ENCODE measurements at regions of chr12 and their contacts with region 1.

Region 1: GRCh38 chr12:15584366-15585041 is 204.7 kb downstream of the EPS8 start:
- DNase-seq: peak; percentile 52
- H3K4me3 ChIP-seq: no peak overlapping the region
- H3K27ac ChIP-seq: no peak overlapping the region
- H3K4me1 ChIP-seq: no peaks in the 10 kb centered on the region
- H3K27me3 ChIP-seq: peaks cover 5 to 11% of the 10 kb centered on the region in 2 experiments
- CTCF ChIP-seq: peak; percentile 48 to 60
- POLR2A ChIP-seq: no peak

Region 2: DNA sequence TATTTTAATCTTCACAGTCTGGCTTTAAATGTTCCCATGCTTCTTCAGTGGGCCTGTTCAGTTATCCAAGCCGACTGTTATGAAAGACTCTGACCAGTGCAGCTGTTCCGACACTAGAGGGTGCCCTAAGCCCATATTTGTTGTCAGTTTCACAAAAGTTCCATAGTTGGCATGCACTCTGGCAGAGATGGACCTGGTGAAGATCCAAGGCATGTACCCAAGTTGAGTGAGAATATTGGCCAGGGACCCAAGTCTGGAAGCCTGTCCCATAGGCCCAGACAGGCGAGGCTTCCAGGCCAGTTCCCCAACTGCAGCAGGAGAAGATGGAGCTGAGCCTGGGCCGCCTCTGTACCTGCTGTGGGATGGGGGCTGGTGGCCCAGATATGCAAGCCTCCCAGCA is 860.7 kb before region 1 on chr12:
- CTCF ChIA-PET with region 1: interaction called, 12 read pairs
- POLR2A ChIA-PET with region 1: no interaction called
- dilution Hi-C with region 1: no loop called
- intact Hi-C with region 1: no loop called
- DNase-seq: peak; percentile 56
- H3K4me3 ChIP-seq: no peak overlapping the region
- H3K27ac ChIP-seq: no peak overlapping the region
- H3K4me1 ChIP-seq: no peaks in the 10 kb centered on the region
- H3K27me3 ChIP-seq: peaks cover 0 to 2% of the 10 kb centered on the region in 2 experiments
- CTCF ChIP-seq: peak; percentile 57 to 75
- POLR2A ChIP-seq: no peak

Region 3: GRCh38 chr12:15122344-15122743 is 462.2 kb before region 1 on chr12:
- CTCF ChIA-PET with region 1: no interaction called
- POLR2A ChIA-PET with region 1: no interaction called
- dilution Hi-C with region 1: no loop called
- intact Hi-C with region 1: no loop called
- DNase-seq: no peak
- H3K4me3 ChIP-seq: no peak overlapping the region
- H3K27ac ChIP-seq: no peak overlapping the region
- H3K4me1 ChIP-seq: no peaks in the 10 kb centered on the region
- H3K27me3 ChIP-seq: peaks cover 0 to 3% of the 10 kb centered on the region in 2 experiments
- CTCF ChIP-seq: no peak
- POLR2A ChIP-seq: no peak

Region 4: DNA sequence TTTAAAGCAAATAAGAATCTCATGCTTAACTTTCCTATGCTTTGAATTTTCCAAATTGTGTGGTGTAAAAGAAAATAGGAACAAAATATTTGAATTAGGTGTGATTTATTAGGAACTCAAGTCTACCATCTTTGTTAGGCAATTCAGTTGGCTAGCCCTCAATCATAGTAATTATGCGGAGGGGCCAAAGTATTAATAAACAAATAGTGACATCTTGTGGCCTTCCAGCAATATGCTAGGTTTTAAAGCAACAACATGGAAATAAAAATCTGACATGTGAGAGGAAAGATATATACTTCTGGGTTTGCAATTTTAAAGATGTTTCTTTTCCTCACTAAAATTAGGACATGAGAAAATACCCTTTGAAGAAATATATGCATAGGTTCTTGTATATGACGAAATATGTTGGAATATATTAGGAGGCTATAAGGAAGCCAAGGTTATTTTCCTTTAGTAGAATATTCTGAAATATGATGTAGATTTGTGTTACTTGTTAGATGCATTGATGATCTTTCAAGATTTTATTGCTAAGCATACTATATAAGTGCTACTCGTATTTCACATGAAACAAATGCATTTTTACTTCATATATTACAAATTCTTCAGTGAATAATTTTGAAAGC is 61.8 kb before region 1 on chr12:
- CTCF ChIA-PET with region 1: interaction called, 18 read pairs
- POLR2A ChIA-PET with region 1: no interaction called
- dilution Hi-C with region 1: no loop called
- intact Hi-C with region 1: no loop called
- DNase-seq: peak; percentile 54
- H3K4me3 ChIP-seq: no peak overlapping the region
- H3K27ac ChIP-seq: no peak overlapping the region
- H3K4me1 ChIP-seq: no peaks in the 10 kb centered on the region
- H3K27me3 ChIP-seq: peaks cover 6 to 24% of the 10 kb centered on the region in 2 experiments
- CTCF ChIP-seq: peak; percentile 22 to 27
- POLR2A ChIP-seq: no peak

Region 5: DNA sequence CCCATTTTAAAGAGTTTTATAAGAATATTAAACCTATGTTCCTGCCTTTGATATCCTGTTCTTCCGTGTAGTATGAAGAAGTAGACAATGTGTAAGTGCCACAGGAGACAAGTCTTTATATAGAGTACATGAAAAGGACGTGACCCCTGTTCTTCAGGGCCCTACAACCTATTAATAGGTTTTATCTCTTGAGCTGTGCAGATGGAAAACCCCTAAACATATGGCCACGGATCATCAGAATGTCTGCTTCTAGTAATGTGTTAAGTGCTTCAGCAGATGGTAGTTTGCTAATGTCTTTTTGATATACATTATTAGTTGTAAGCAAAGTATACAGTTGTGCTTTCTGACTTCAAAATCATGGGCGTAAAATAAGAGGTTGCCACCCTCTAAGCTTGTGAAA is 33.7 kb before region 1 on chr12:
- CTCF ChIA-PET with region 1: interaction called, 10 read pairs
- POLR2A ChIA-PET with region 1: no interaction called
- dilution Hi-C with region 1: no loop called
- intact Hi-C with region 1: no loop called
- DNase-seq: no peak
- H3K4me3 ChIP-seq: no peak overlapping the region
- H3K27ac ChIP-seq: no peak overlapping the region
- H3K4me1 ChIP-seq: no peaks in the 10 kb centered on the region
- H3K27me3 ChIP-seq: peaks cover 3 to 4% of the 10 kb centered on the region in 2 experiments
- CTCF ChIP-seq: no peak
- POLR2A ChIP-seq: no peak

Region 6: DNA sequence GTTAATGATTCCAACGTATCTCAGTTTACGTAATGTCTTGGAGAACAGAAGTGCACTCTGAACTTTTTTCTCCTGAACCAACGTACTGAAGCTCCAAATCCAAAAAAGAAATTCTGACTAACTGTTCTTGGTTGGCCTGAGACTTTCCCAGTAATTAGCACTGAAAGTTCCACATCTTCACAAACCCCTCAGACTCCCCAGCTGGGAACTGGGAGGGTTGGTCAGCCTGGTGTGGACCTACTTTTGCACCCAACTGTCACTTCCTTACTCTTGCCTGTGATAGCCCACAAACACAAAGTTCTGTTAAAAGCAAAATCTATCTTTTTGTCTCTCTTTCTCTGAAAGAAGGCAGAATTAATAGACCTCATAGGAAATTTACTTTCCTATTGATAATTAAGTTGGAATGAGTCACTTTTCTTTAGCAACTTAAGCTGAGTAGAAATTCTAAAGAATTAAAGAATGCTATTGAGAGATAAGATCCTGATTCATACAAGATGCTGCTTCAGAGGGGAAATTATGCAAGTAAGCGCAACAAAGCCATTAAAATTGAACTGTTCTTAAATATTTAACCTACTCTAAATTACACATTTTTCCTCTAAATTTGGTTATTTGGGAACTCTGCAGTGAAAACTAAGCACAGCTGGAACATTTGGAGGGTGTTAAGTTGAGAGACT is 49.6 kb after region 1 on chr12:
- CTCF ChIA-PET with region 1: no interaction called
- POLR2A ChIA-PET with region 1: no interaction called
- dilution Hi-C with region 1: no loop called
- intact Hi-C with region 1: no loop called
- DNase-seq: peak; percentile 53
- H3K4me3 ChIP-seq: no peak overlapping the region
- H3K27ac ChIP-seq: peak overlapping the region; percentile 23
- H3K4me1 ChIP-seq: peaks cover 70% of the 10 kb centered on the region
- H3K27me3 ChIP-seq: no peaks in the 10 kb centered on the region
- CTCF ChIP-seq: no peak
- POLR2A ChIP-seq: no peak

Region 7: GRCh38 chr12:15830538-15830937 is 246.0 kb after region 1 on chr12:
- CTCF ChIA-PET with region 1: interaction called, 12 read pairs
- POLR2A ChIA-PET with region 1: no interaction called
- dilution Hi-C with region 1: no loop called
- intact Hi-C with region 1: no loop called
- DNase-seq: no peak
- H3K4me3 ChIP-seq: no peak overlapping the region
- H3K27ac ChIP-seq: no peak overlapping the region
- H3K4me1 ChIP-seq: no peaks in the 10 kb centered on the region
- H3K27me3 ChIP-seq: no peaks in the 10 kb centered on the region
- CTCF ChIP-seq: no peak
- POLR2A ChIP-seq: no peak

Region 8: DNA sequence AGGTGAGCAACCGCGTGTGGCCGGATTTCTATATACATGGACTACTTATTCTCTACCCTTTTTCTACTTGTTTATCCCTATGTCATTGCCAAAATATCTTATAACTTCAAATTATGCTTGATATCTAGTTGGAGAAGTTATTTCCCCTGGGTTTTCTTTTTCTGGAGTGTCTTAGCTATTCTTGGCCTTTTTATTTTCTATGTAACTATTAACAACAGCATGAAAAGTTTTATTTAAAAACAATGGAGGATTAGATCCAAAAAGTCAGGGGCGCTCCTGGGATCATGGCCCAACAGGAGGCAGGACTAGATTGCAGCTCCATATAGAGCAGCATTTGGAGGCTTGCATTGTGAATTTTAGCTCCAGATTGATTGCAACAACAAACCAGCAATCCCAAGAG is 289.1 kb after region 1 on chr12:
- CTCF ChIA-PET with region 1: interaction called, 10 read pairs
- POLR2A ChIA-PET with region 1: no interaction called
- dilution Hi-C with region 1: no loop called
- intact Hi-C with region 1: no loop called
- DNase-seq: no peak
- H3K4me3 ChIP-seq: no peak overlapping the region
- H3K27ac ChIP-seq: no peak overlapping the region
- H3K4me1 ChIP-seq: no peaks in the 10 kb centered on the region
- H3K27me3 ChIP-seq: no peaks in the 10 kb centered on the region
- CTCF ChIP-seq: no peak
- POLR2A ChIP-seq: no peak